ENCODE measurements at regions of chr7 and their contacts with region 1.

Region 1: DNA sequence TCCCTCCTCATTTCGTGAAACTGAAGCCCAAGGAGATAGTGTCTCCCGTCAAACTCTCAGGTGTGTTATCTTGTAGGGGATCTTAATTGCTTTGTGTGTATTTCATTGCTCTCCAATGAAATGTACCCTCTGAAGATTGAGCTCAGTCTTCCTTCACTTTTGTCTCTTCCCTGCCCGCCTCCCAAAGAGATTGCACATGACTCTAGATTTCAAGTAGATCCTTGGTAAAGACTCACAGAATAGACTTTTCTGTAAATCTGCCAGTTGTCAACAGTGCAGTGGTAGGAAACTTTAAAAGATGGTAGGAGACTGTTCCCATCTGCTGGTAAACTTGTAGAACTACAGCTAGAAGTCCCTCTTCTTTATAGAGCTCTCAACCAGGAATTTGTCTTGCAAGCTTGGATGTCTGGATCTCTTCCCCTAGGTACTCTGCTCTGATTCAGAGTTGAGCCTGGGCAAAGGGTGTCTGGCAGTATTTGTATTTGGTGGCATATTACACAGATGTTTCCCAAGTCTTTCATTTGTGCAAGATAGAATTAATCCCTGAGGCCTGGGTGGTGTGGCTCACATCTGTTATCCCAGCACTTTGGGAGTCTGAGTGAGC is 9.6 kb downstream of the CCL26 start:
- H3K4me3 Mint-ChIP-seq: no peak overlapping the region
- H3K27ac Mint-ChIP-seq: peak overlapping the region; percentile 31
- H3K4me1 Mint-ChIP-seq: peaks cover 9% of the 10 kb centered on the region
- H3K27me3 Mint-ChIP-seq: no peaks in the 10 kb centered on the region

Region 2: GRCh38 chr7:75727881-75728592 is 34.4 kb before region 1 on chr7:
- intact Hi-C with region 1: loop called (anchors 5 kb)
- H3K4me3 Mint-ChIP-seq: no peak overlapping the region
- H3K27ac Mint-ChIP-seq: no peak overlapping the region
- H3K4me1 Mint-ChIP-seq: peaks cover 52% of the 10 kb centered on the region
- H3K27me3 Mint-ChIP-seq: no peaks in the 10 kb centered on the region

Measured in dendritic cell treated with granulocyte-macrophage colony-stimulating factor and Interleukin-4, amounts not matched to agents 40 ng/mL and 50 ng/mL, for 4 days (primary cell).